PC-3 (cell line): ENCODE measurements at regions of chr5 and their contacts with region 1.

Region 1: GRCh38 chr5:103519550-103519949 is 43.0 kb downstream of the NUDT12 start:
- DNase-seq: peak; percentile 73
- ATAC-seq: peak; percentile 37; the same call in 1 of the 2 replicates
- H3K4me3 ChIP-seq: no peak overlapping the region
- H3K27ac ChIP-seq: no peak overlapping the region
- H3K4me1 ChIP-seq: peaks cover 16% of the 10 kb centered on the region
- H3K27me3 ChIP-seq: no peaks in the 10 kb centered on the region
- CTCF ChIP-seq: peak; percentile 84

Region 2: GRCh38 chr5:103450333-103451061 is 69.1 kb before region 1 on chr5:
- CTCF ChIA-PET with region 1: no interaction called
- POLR2A ChIA-PET with region 1: no interaction called
- intact Hi-C with region 1: no loop called
- DNase-seq: peak; percentile 87
- ATAC-seq: peak; percentile 83
- H3K4me3 ChIP-seq: no peak overlapping the region
- H3K27ac ChIP-seq: no peak overlapping the region
- H3K4me1 ChIP-seq: peaks cover 43% of the 10 kb centered on the region
- H3K27me3 ChIP-seq: no peaks in the 10 kb centered on the region
- CTCF ChIP-seq: no peak

Region 3: DNA sequence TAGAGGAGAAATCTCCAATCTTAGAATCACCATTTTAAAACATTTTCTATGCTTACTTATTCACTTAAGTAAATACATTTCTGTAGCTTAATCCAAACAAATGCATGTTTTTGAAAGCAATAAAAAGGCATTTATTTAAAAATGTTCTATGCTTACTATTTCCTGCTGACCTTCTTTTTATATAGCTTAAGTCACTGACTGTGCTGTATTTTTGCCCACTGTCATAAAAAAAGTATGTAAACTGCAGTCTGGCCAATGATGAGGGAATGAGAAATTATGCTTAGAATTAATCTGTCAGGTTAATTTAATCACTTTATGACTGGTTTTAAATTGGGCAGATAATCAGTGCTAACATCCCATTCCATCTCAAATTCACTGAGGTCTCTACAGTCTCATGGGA is 22.9 kb after region 1 on chr5:
- CTCF ChIA-PET with region 1: no interaction called
- POLR2A ChIA-PET with region 1: no interaction called
- intact Hi-C with region 1: loop called (anchors 2 kb)
- DNase-seq: peak; percentile 17
- ATAC-seq: peak; percentile 82
- H3K4me3 ChIP-seq: no peak overlapping the region
- H3K27ac ChIP-seq: no peak overlapping the region
- H3K4me1 ChIP-seq: no peaks in the 10 kb centered on the region
- H3K27me3 ChIP-seq: no peaks in the 10 kb centered on the region
- CTCF ChIP-seq: no peak